A673 (cell line): ENCODE measurements at regions of chr5 and their contacts with region 1.

Region 1: GRCh38 chr5:157858527-157859226 is at the start of gene CLINT1:
- DNase-seq: peak; percentile 91
- H3K4me3 ChIP-seq: peak within 1 kb of the TSS; percentile 98
- H3K27ac ChIP-seq: peak within 1 kb of the TSS; percentile 96
- H3K4me1 ChIP-seq: peaks cover 6% of the 10 kb centered on the region
- H3K27me3 ChIP-seq: no peaks in the 10 kb centered on the region
- CTCF ChIP-seq: no peak
- total RNA-seq, gene CLINT1: 69.6 and 71.4 TPM in 2 replicates

Region 2: GRCh38 chr5:157558041-157558595 is 300.6 kb before region 1 on chr5:
- CTCF ChIA-PET with region 1: no interaction called
- POLR2A ChIA-PET with region 1: no interaction called
- intact Hi-C with region 1: no loop called
- DNase-seq: no peak
- H3K4me3 ChIP-seq: no peak overlapping the region
- H3K27ac ChIP-seq: no peak overlapping the region
- H3K4me1 ChIP-seq: no peaks in the 10 kb centered on the region
- H3K27me3 ChIP-seq: no peaks in the 10 kb centered on the region
- CTCF ChIP-seq: no peak

Region 3: GRCh38 chr5:157799578-157799977 is 59.1 kb before region 1 on chr5:
- CTCF ChIA-PET with region 1: no interaction called
- POLR2A ChIA-PET with region 1: no interaction called
- intact Hi-C with region 1: no loop called
- DNase-seq: no peak
- H3K4me3 ChIP-seq: no peak overlapping the region
- H3K27ac ChIP-seq: no peak overlapping the region
- H3K4me1 ChIP-seq: no peaks in the 10 kb centered on the region
- H3K27me3 ChIP-seq: no peaks in the 10 kb centered on the region
- CTCF ChIP-seq: no peak

Region 4: DNA sequence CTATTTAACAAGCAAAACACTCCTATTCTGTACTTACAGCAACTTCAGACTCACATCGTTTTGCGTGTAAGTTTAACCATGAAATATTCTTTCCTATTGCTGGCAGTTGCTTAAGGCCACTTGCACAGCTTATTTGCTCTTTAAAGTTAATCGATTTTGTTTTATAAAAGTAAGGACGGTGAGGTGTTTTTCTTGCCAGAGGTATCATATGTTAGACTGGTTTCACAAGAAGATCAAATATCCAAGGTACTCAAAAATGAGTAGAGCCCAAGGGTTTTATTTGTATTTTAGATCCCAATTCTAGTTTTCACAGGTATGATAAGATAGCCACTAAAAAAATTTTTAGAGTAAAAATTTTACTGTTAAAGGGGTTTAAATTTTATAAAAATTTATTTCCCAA is 15.9 kb before region 1 on chr5:
- CTCF ChIA-PET with region 1: interaction called, 3 read pairs
- POLR2A ChIA-PET with region 1: interaction called, 12 read pairs
- intact Hi-C with region 1: no loop called
- DNase-seq: no peak
- H3K4me3 ChIP-seq: no peak overlapping the region
- H3K27ac ChIP-seq: no peak overlapping the region
- H3K4me1 ChIP-seq: no peaks in the 10 kb centered on the region
- H3K27me3 ChIP-seq: no peaks in the 10 kb centered on the region
- CTCF ChIP-seq: no peak

Region 5: GRCh38 chr5:157948738-157949410 is 90.2 kb after region 1 on chr5:
- CTCF ChIA-PET with region 1: interaction called, 6 read pairs
- POLR2A ChIA-PET with region 1: no interaction called
- intact Hi-C with region 1: loop called (anchors 5 kb)
- DNase-seq: peak; percentile 93
- H3K4me3 ChIP-seq: no peak overlapping the region
- H3K27ac ChIP-seq: peak overlapping the region; percentile 79
- H3K4me1 ChIP-seq: peaks cover 30% of the 10 kb centered on the region
- H3K27me3 ChIP-seq: no peaks in the 10 kb centered on the region
- CTCF ChIP-seq: peak; percentile 83